ENCODE measurements at regions of chr21 and their contacts with region 1.

Region 1: DNA sequence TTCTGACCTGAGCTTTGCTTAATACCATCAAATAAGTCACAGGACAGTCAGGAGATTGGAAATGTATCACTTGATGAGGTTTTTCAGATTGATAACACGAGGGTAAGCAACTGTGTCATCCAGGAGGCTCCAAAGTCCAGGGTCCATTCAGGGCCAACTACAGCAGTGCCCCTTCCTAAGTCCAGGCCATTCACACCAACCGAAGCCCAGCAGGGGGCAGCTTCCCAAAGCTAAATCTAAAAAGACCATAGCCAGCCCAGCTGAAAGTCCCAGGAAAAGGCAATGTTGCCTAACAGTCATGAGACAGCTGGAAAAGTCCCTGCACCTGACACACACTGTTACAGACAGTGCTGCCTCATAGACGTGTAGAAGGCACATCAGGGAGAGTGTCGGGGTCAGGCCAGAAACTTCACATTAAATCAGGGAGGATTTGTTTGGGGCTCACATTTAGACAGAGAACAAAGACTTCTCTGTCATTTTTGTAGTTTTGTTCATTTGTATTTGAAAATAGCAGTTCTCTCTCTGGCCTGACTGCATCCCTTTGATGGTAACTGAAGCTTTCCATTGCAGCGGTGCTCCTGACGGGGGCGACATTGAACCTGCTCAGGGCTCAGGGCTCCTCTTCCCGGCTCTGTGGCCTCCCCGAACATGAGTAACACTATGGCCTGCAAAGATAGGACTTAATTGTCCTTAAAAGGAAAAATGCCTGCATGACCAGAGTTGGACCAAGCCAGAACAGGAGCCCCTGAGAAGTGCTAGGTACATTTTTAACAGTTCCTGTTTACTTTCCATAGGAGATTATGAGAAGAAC is 200.4 kb downstream of the NRIP1 start:
- DNase-seq: peak; percentile 57 to 78 (median 72)
- ATAC-seq: peak; percentile 84 to 95 (median 94)
- H3K4me3 ChIP-seq: no peak overlapping the region
- H3K27ac ChIP-seq: peak overlapping the region in 2 of 12 donors; percentile 17 to 30
- H3K4me1 ChIP-seq: peaks cover 0 to 52% (median 4%) of the 10 kb centered on the region in 12 donors
- H3K27me3 ChIP-seq: no peaks in the 10 kb centered on the region
- CTCF ChIP-seq: peak; percentile 51 to 72 (median 59)
- POLR2A ChIP-seq: no peak

Region 2: DNA sequence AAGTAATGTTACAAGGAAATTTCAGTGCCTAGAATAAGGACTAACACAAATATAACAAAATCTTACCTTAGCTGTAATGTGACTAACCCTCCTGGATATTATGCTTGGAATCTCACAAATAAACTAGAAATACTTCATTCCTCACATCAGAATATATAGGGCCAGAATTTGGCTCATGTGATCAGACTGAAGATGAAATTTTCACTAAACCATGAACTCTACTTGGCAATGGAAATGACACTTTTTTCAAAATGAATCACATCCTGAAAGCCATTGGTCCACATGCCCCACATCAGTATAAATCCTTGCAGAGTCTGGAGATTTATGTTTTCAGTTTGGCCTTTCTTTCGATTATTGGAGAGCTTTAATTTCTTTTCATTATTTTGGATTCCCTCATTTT is 27.5 kb before region 1 on chr21:
- intact Hi-C with region 1: no loop called
- DNase-seq: no peak
- ATAC-seq: no peak
- H3K4me3 ChIP-seq: no peak overlapping the region
- H3K27ac ChIP-seq: no peak overlapping the region
- H3K4me1 ChIP-seq: no peaks in the 10 kb centered on the region
- H3K27me3 ChIP-seq: no peaks in the 10 kb centered on the region
- CTCF ChIP-seq: no peak
- POLR2A ChIP-seq: no peak

Region 3: GRCh38 chr21:14901482-14901958 is 37.1 kb after region 1 on chr21:
- intact Hi-C with region 1: loop called in 1 of 10 experiments (anchors 5 kb)
- DNase-seq: no peak
- ATAC-seq: no peak
- H3K4me3 ChIP-seq: no peak overlapping the region
- H3K27ac ChIP-seq: no peak overlapping the region
- H3K4me1 ChIP-seq: no peaks in the 10 kb centered on the region
- H3K27me3 ChIP-seq: no peaks in the 10 kb centered on the region
- CTCF ChIP-seq: no peak
- POLR2A ChIP-seq: no peak

Region 4: DNA sequence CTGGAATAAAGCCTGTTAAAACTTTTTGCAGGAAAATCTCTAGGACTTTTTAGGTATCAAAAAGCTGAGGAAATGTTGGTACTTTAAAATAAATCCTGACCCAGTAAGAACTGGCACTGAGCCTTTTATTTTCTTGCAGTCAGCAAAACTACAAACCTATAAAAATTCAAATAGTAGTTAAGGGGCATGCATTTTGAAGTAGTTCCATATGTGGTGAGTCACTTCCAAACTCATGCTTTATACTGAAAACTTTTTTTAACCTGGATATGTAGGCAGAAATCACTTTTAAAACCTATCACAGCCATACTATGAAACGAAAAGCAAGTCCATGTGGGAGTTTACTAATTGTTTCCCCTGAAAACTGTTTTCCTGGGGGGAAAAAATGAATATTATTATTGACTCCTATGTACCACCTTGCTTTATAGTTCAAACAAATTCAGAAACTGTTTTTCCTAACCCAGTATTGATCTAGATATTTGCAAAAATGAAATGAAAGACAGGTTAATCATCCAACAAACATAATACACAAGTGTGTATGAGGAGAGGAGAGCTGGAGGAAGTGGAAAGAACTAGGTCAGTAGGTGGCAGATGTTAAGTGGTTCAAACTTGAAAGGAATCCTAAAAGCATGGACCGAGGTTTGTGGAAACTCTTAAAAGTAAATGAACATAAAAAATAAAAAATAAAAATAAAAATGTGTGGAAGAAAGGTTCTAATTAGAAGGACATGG is 169.9 kb after region 1 on chr21:
- intact Hi-C with region 1: no loop called
- DNase-seq: no peak
- ATAC-seq: peak in 2 of 4 donors; percentile 41 to 50
- H3K4me3 ChIP-seq: no peak overlapping the region
- H3K27ac ChIP-seq: no peak overlapping the region
- H3K4me1 ChIP-seq: peaks cover 0 to 35% (median 12%) of the 10 kb centered on the region in 12 donors
- H3K27me3 ChIP-seq: no peaks in the 10 kb centered on the region
- CTCF ChIP-seq: peak in 1 of 12 donors; percentile 15
- POLR2A ChIP-seq: no peak

Region 5: DNA sequence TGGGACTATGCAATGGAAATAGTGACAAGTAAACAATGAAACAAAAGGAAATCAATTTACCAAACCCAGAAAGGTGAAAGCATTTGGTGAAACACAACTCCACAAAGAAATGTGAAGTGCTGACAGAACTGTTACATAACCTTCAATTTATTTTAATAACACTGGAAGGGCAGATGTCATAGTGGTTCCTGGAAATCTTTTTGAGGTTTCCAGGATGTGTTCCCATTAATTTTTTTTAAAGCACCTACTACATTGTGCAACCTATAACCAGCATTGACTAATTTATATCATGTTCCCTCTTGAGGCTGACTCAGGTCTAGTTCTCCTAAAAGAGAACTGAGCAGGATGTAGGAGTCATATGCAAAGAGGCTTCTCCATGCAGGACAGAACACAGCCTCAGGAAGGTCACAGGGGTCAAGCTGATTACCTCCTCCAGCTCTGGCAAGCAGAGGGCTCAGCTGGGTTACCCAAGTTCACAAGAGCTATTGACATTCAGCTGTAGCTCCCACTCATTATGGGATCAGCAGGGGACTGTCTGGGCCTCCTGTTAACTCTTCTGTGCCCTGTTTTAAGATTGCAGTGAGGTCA is 357.5 kb after region 1 on chr21:
- intact Hi-C with region 1: loop called in 1 of 10 experiments (anchors 10 kb)
- DNase-seq: peak in 4 of 5 donors; percentile 41 to 76 (median 69)
- ATAC-seq: peak; percentile 90 to 100 (median 99)
- H3K4me3 ChIP-seq: no peak overlapping the region
- H3K27ac ChIP-seq: peak overlapping the region in 6 of 12 donors; percentile 3 to 54 (median 35)
- H3K4me1 ChIP-seq: peaks cover 0 to 36% (median 12%) of the 10 kb centered on the region in 12 donors
- H3K27me3 ChIP-seq: no peaks in the 10 kb centered on the region
- CTCF ChIP-seq: no peak
- POLR2A ChIP-seq: no peak

Region 6: DNA sequence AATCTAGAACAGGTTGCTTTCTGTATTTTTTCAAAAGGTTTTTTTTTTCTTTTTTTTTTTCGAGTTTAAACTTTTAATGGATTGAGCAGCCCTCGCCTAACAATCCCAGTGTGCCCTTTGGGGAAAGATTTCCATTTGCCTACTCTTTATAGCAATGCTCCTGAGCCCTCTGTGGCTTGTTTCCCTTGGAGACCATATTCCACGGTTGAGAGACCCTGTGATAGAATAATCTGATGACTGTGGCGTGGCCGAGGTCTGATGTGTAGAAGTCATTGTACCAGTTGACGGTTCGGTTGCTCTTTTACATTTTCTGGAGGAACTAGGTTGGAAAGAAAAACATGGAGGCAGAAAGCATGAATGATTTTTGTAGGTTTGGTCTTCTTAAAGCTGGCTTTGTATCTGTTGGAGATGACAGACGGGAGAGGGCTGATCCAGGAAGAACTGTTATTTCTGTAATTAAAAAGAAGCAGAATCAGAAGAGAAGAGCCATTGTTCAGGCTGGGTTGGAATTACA is 506.1 kb after region 1 on chr21:
- intact Hi-C with region 1: no loop called
- DNase-seq: no peak
- ATAC-seq: no peak
- H3K4me3 ChIP-seq: no peak overlapping the region
- H3K27ac ChIP-seq: no peak overlapping the region
- H3K4me1 ChIP-seq: no peaks in the 10 kb centered on the region
- H3K27me3 ChIP-seq: no peaks in the 10 kb centered on the region
- CTCF ChIP-seq: no peak
- POLR2A ChIP-seq: no peak

Region 7: DNA sequence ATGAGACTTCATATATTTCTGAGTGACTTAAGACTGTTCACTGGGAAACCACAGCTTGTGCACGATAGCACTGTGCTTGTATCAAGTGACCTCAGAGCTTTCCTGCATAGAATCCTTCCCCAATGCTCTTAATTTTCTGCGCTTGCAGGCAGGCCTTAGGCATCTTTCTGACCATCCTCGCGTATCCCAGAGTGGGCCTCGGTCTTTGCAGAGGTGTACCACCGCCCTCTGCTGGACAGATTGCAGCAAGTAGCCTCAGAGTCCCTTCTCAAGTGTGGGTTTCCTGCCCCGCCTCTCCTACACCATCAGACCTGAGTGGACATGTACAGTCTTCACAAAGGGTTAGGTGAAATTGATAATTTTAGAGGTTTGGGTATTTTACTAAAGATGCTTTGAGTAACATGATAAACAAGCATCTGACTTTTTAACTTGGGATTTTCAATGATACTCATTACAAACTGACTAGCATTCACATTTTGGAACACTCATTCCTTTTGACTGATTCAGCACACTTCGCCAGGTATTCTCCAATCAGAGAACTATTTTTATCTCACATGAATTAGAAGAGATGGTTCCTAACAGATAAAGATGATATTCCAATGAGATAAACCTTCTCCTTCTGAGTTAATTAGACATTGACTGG is 618.8 kb after region 1 on chr21:
- intact Hi-C with region 1: loop called (anchors 1 to 5 kb)
- DNase-seq: peak; percentile 87 to 91 (median 88)
- ATAC-seq: peak; percentile 92 to 100 (median 98)
- H3K4me3 ChIP-seq: no peak overlapping the region
- H3K27ac ChIP-seq: no peak overlapping the region
- H3K4me1 ChIP-seq: peaks cover 0 to 5% (median 0%) of the 10 kb centered on the region in 12 donors
- H3K27me3 ChIP-seq: no peaks in the 10 kb centered on the region
- CTCF ChIP-seq: peak; percentile 82 to 97 (median 92)
- POLR2A ChIP-seq: no peak